ENCODE measurements at regions of chr3 and their contacts with region 1.

Region 1: DNA sequence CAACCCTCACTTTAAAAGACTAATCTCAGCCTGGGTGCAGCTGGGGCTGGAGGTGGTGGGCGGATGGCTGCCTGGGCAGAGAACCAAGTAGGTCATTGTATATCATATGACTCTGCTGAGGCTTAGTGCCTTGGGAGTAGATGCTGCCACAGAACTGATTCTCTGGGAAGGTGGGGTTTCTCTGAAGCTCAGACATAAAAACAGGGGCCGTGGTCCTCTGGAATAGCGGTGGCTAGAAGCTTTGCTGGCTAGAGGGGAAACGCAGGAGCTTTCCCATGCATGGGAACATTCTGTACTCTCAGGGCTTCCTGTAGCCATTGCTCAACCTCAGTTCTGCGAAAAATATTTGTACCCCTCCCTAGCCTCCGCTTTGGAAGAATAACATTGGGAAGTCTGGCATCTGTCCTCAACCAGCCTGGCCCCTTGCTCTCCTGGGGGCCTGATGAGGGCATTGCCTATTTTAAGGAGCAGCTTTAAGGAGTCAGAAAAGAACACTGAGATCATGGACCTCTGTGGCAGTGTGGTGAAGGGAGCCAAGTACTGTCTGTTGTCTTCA is 14.7 kb downstream of the TIMP4 start:
- DNase-seq: peak in 1 of 5 donors; percentile 77
- H3K4me3 ChIP-seq: no peak overlapping the region
- H3K27ac ChIP-seq: peak overlapping the region in 1 of 2 donors; percentile 76
- H3K4me1 ChIP-seq: no peaks in the 10 kb centered on the region
- H3K27me3 ChIP-seq: no peaks in the 10 kb centered on the region
- CTCF ChIP-seq: no peak

Region 2: DNA sequence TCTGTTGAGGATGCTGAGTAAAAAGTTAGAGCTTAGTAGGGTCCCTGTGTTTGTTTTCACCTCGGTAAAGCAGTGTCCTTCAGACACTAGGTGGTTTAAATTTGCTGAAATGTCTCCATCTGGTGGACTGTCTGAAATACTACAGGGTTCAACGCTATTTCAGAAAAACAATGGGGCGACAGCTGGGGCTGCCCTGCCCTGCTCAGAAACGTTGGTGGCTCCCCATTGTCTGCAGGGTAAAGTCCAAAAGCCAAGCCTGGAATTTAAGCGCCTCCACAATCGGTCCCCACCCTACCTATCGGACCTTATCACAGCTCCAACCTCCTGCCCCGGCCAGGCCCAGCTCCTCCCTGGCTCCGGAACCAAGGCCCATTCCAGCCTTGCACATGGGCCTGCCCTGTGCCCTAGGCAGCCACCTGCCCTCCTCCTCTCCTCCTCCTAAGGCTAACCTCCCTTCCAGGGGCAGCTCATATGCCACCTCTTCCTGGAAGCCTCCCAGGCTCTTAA is 335.9 kb after region 1 on chr3:
- intact Hi-C with region 1: loop called (anchors 5 kb)
- DNase-seq: peak in 3 of 5 donors; percentile 61 to 71 (median 63)
- H3K4me3 ChIP-seq: no peak overlapping the region
- H3K27ac ChIP-seq: no peak overlapping the region
- H3K4me1 ChIP-seq: peaks cover 6 to 9% (median 7%) of the 10 kb centered on the region in 3 donors
- H3K27me3 ChIP-seq: no peaks in the 10 kb centered on the region
- CTCF ChIP-seq: peak; percentile 85